A673 (cell line): ENCODE measurements at regions of chr12 and their contacts with region 1.

Region 1: GRCh38 chr12:76878899-76879709 is at the start of gene CSRP2:
- DNase-seq: peak; percentile 93
- H3K4me3 ChIP-seq: peak within 1 kb of the TSS; percentile 75
- H3K27ac ChIP-seq: peak within 1 kb of the TSS; percentile 79
- H3K4me1 ChIP-seq: peaks cover 4% of the 10 kb centered on the region
- H3K27me3 ChIP-seq: no peaks in the 10 kb centered on the region
- CTCF ChIP-seq: peak; percentile 30; the same call in 1 of the 2 replicates
- total RNA-seq, gene CSRP2: 46.6 and 59.6 TPM in 2 replicates

Region 2: GRCh38 chr12:76820888-76821482 is 58.1 kb before region 1 on chr12:
- CTCF ChIA-PET with region 1: no interaction called
- POLR2A ChIA-PET with region 1: no interaction called
- intact Hi-C with region 1: loop called (anchors 2 kb)
- DNase-seq: peak; percentile 61
- H3K4me3 ChIP-seq: no peak overlapping the region
- H3K27ac ChIP-seq: no peak overlapping the region
- H3K4me1 ChIP-seq: no peaks in the 10 kb centered on the region
- H3K27me3 ChIP-seq: no peaks in the 10 kb centered on the region
- CTCF ChIP-seq: peak; percentile 73

Region 3: DNA sequence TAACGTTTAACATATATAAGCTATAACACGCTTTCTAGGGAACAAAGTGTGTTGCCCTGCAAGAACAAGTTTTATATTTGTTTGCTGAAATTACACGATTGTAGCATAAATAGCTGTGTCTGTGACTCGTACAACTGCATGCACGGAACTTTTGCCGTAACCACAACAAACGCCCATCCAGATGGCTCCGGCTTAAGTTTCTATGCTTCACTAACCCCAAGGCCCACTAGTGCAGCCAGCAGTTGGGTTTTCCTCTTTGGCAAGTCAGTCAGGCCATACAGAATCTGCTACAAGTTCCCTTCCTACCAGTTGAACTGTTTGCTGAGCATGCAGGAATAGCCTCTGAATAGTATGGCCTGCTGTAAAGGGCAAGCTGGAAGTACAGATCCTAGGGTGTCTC is 12.4 kb before region 1 on chr12:
- CTCF ChIA-PET with region 1: interaction called, 13 read pairs
- POLR2A ChIA-PET with region 1: interaction called, 3 read pairs
- intact Hi-C with region 1: no loop called
- DNase-seq: no peak
- H3K4me3 ChIP-seq: no peak overlapping the region
- H3K27ac ChIP-seq: no peak overlapping the region
- H3K4me1 ChIP-seq: peaks cover 8% of the 10 kb centered on the region
- H3K27me3 ChIP-seq: no peaks in the 10 kb centered on the region
- CTCF ChIP-seq: no peak